ENCODE measurements at regions of chr2 and their contacts with region 1.

Region 1: DNA sequence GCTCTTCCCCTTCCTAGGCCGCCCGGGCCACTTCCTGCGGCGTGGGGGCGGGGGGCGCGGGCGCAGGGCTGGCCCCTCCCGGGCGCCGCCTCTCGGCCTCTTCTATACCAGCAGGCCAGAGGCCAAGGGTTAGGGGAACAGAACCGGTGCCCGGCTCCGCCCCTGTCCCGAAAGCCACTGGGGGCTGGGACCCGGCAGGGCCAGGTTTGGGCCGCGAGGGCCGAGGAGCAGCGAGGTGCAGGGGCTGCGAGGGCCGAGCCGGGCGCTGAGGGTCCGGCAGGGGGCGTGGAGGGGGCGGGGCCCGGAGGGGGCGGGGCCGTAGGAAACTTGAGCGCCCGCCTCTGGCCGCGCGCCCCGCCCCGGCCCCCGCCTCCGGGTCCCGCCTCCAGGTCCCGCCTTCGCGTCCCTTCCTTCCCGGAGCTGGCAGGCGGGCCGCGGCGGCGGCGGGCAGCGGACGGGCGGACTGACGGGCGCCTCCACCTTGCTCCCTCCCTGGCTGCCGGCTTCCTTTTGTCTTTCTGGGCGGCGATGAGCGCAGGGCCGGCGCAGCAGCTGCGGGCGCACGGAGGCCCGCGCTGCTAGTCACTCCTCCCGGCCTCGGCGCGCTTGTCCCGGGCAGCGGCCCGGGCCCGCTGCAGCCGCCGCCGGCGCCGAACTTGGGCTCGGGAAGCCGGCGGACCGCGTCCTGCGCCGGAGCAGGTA is at the start of gene HPCAL1:
- DNase-seq: peak; percentile 81
- H3K4me3 ChIP-seq: peak within 1 kb of the TSS; percentile 67 to 78 (median 72)
- H3K27ac ChIP-seq: peak within 1 kb of the TSS; percentile 27
- H3K4me1 ChIP-seq: peaks cover 22% of the 10 kb centered on the region
- H3K27me3 ChIP-seq: no peaks in the 10 kb centered on the region
- CTCF ChIP-seq: peak; percentile 26 to 53
- POLR2A ChIP-seq: peak; percentile 89
- total RNA-seq, gene HPCAL1: 68.1 and 77.4 TPM in 2 replicates

Region 2: GRCh38 chr2:10141736-10142642 is 160.6 kb before region 1 on chr2:
- CTCF ChIA-PET with region 1: interaction called, 31 read pairs
- POLR2A ChIA-PET with region 1: no interaction called
- dilution Hi-C with region 1: no loop called
- intact Hi-C with region 1: loop called (anchors 1 kb)
- DNase-seq: no peak
- H3K4me3 ChIP-seq: no peak overlapping the region
- H3K27ac ChIP-seq: no peak overlapping the region
- H3K4me1 ChIP-seq: no peaks in the 10 kb centered on the region
- H3K27me3 ChIP-seq: no peaks in the 10 kb centered on the region
- CTCF ChIP-seq: peak; percentile 50 to 65
- POLR2A ChIP-seq: no peak

Region 3: DNA sequence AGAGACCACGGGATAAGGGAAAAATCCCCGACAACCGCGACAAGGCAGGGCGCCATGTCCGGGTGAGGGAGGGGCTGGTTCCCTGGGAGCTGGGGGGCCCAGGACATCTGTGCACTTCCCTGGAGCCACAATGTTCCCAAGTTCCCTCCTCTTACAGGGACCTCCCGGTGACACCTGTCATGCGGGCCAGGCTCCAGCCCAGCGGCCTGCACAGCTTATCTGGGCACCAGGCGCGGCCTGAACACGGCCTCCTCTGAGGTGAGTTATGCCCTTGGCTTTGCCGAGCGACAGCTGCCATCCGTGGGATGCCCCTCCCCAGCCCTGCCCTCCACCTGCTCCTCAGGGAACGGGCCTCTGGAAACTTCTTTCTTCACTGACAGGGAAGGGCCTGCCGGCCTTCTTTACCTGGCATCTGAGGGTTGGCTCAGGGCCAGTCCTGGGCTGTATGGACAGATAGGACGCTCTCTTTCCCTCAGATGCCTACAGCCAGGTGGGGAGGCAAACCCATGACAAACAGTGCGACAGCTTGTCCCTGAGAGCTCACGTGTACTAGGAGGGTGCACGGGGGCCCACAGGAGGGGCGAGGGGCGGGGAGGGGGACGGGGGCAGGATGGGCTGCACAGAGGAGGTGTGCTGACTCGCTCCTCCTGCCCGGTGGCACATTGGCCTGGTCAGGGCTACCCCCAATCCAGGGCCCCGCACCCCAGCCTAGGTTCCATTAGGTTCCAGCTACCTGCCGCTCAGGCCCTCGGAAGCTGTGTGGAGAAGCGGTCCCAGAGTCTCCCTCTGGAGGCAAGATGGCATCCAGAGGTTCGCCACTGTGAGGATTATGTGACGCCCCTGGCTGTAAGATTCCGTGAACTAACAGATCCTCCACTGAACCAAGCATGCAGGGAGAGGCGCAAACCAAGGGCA is 34.8 kb before region 1 on chr2:
- CTCF ChIA-PET with region 1: interaction called, 10 read pairs
- POLR2A ChIA-PET with region 1: no interaction called
- dilution Hi-C with region 1: no loop called
- intact Hi-C with region 1: loop called (anchors 1 kb)
- DNase-seq: no peak
- H3K4me3 ChIP-seq: no peak overlapping the region
- H3K27ac ChIP-seq: no peak overlapping the region
- H3K4me1 ChIP-seq: peaks cover 3% of the 10 kb centered on the region
- H3K27me3 ChIP-seq: no peaks in the 10 kb centered on the region
- CTCF ChIP-seq: no peak
- POLR2A ChIP-seq: no peak

Region 4: GRCh38 chr2:10316336-10316735 is 13.7 kb after region 1 on chr2:
- CTCF ChIA-PET with region 1: interaction called, 7 read pairs
- POLR2A ChIA-PET with region 1: no interaction called
- dilution Hi-C with region 1: no loop called
- intact Hi-C with region 1: loop called (anchors 1 kb)
- DNase-seq: no peak
- H3K4me3 ChIP-seq: no peak overlapping the region
- H3K27ac ChIP-seq: no peak overlapping the region
- H3K4me1 ChIP-seq: no peaks in the 10 kb centered on the region
- H3K27me3 ChIP-seq: no peaks in the 10 kb centered on the region
- CTCF ChIP-seq: no peak
- POLR2A ChIP-seq: no peak

Region 5: GRCh38 chr2:10331027-10331701 is 28.5 kb after region 1 on chr2:
- CTCF ChIA-PET with region 1: interaction called, 33 read pairs
- POLR2A ChIA-PET with region 1: no interaction called
- dilution Hi-C with region 1: no loop called
- intact Hi-C with region 1: no loop called
- DNase-seq: peak; percentile 49
- H3K4me3 ChIP-seq: peak overlapping the region in 1 of 3 experiments; percentile 20
- H3K27ac ChIP-seq: peak overlapping the region; percentile 88
- H3K4me1 ChIP-seq: peaks cover 51% of the 10 kb centered on the region
- H3K27me3 ChIP-seq: no peaks in the 10 kb centered on the region
- CTCF ChIP-seq: peak in 1 of 2 donors; percentile 9
- POLR2A ChIP-seq: no peak